ENCODE measurements at regions of chrX and their contacts with region 1.

Region 1: GRCh38 chrX:2875798-2876399 is 47.2 kb downstream of the GYG2 start:
- DNase-seq: no peak
- H3K4me3 ChIP-seq: no peak overlapping the region
- H3K27ac ChIP-seq: no peak overlapping the region
- H3K4me1 ChIP-seq: no peaks in the 10 kb centered on the region
- H3K27me3 ChIP-seq: no peaks in the 10 kb centered on the region
- CTCF ChIP-seq: peak; percentile 32

Region 2: DNA sequence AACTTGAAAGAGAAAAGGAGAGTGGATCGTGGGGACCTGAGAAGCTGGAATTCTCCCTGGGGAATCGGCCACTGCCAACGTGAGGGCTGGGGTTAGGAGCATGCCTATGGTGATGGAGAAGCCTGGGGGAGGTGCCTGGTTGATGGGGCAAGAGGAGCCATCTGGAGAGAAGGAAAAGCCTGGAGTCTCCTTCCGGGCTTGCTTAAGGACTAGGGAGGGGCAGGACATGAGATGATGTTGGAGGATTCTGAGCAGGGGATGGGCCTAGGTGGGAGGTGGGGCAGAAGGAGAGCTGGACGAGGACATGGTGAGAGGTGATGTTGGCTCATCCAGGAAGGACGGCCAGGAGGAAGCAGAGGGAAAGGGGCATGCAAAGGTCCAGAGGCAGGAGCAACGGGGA is 82.1 kb before region 1 on chrX:
- intact Hi-C with region 1: no loop called
- DNase-seq: no peak
- H3K4me3 ChIP-seq: no peak overlapping the region
- H3K27ac ChIP-seq: no peak overlapping the region
- H3K4me1 ChIP-seq: no peaks in the 10 kb centered on the region
- H3K27me3 ChIP-seq: no peaks in the 10 kb centered on the region
- CTCF ChIP-seq: no peak

Region 3: GRCh38 chrX:3037218-3037617 is 161.3 kb after region 1 on chrX:
- intact Hi-C with region 1: loop called (anchors 10 kb)
- DNase-seq: no peak
- H3K4me3 ChIP-seq: no peak overlapping the region
- H3K27ac ChIP-seq: no peak overlapping the region
- H3K4me1 ChIP-seq: no peaks in the 10 kb centered on the region
- H3K27me3 ChIP-seq: no peaks in the 10 kb centered on the region
- CTCF ChIP-seq: no peak

Region 4: GRCh38 chrX:3271834-3272186 is 395.9 kb after region 1 on chrX:
- intact Hi-C with region 1: no loop called
- DNase-seq: no peak
- H3K4me3 ChIP-seq: no peak overlapping the region
- H3K27ac ChIP-seq: no peak overlapping the region
- H3K4me1 ChIP-seq: no peaks in the 10 kb centered on the region
- H3K27me3 ChIP-seq: no peaks in the 10 kb centered on the region
- CTCF ChIP-seq: no peak

Region 5: GRCh38 chrX:3638280-3638873 is 762.5 kb after region 1 on chrX:
- intact Hi-C with region 1: loop called (anchors 10 kb)
- DNase-seq: peak; percentile 57
- H3K4me3 ChIP-seq: no peak overlapping the region
- H3K27ac ChIP-seq: no peak overlapping the region
- H3K4me1 ChIP-seq: no peaks in the 10 kb centered on the region
- H3K27me3 ChIP-seq: no peaks in the 10 kb centered on the region
- CTCF ChIP-seq: peak; percentile 74

Measured in colonic mucosa (tissue), 4 donors.